Naive thymus-derived CD4-positive, alpha-beta T cell (primary cell): ENCODE measurements at regions of chr14 and their contacts with region 1.

Region 1: DNA sequence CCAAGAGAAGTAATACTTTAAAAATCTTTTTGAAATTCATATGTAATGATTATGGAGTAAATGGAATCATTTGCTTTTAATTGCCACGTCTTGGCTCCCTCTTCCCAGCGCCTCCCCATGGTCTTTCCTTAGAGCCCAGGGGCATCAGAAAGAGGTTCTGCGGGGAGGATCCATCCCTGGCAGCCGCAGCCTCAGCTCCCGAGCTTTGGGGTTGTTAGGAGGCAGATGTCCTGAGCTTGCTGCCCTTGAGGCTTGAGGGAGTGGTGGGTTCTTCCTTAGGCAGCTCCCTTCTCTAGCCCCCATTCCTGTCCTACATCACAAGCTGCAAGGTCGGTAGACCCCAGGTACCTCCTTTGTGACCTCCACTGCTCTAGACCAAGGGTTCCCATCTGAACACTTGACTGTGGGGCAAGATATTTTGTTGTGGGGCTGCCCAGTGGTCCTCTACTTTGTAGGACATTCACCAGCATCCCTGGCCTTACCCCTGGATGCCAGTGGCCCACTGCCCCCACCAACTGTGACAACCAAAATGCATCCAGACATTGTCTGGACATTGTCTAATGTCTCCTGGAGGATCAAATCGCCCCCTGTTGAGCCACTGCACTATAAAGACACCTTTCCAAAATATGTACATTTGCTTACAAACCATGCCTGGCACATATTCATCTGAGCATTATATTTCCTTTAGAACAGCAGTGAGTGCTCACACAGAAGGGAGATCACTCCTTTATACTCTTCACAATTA is 6.3 kb downstream of the PPP2R5C start:
- DNase-seq: no peak
- ATAC-seq: no peak
- H3K4me3 ChIP-seq: no peak overlapping the region
- H3K4me3 Mint-ChIP-seq: no peak overlapping the region
- H3K27ac ChIP-seq: no peak overlapping the region
- H3K27ac Mint-ChIP-seq: peak overlapping the region in 3 of 9 donors; percentile 2 to 43 (median 6)
- H3K4me1 ChIP-seq: peaks cover 9 to 11% of the 10 kb centered on the region in 2 donors
- H3K4me1 Mint-ChIP-seq: peaks cover 28 to 52% (median 38%) of the 10 kb centered on the region in 7 donors
- H3K27me3 ChIP-seq: no peaks in the 10 kb centered on the region
- H3K27me3 Mint-ChIP-seq: no peaks in the 10 kb centered on the region

Region 2: DNA sequence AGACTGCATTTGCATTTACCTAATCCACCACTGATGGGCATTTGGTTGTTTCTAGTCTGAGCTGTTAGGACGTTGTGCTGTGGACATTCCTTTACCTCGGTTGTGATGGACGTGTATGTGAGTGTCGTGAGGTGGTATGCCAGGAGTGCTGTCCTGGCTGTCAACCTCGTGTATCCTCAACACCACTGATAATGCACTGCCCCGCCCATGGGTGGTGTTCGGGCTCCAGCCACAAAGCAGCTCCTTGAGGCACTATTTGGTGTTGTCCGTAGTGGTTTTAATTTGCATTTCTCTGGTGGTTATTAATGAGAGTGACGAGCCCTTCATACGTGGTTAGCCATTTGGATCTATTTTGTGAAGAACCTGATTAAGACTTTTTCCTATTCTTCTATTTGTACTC is 81.3 kb after region 1 on chr14:
- CTCF ChIA-PET with region 1: interaction called, 42 read pairs
- POLR2A ChIA-PET with region 1: interaction called, 5 read pairs
- intact Hi-C with region 1: no loop called
- DNase-seq: no peak
- ATAC-seq: no peak
- H3K4me3 ChIP-seq: no peak overlapping the region
- H3K4me3 Mint-ChIP-seq: peak overlapping the region in 7 of 10 donors; percentile 7 to 85 (median 63)
- H3K27ac ChIP-seq: peak overlapping the region; percentile 1
- H3K27ac Mint-ChIP-seq: peak overlapping the region in 8 of 9 donors; percentile 4 to 95 (median 57)
- H3K4me1 ChIP-seq: peaks cover 50 to 71% of the 10 kb centered on the region in 2 donors
- H3K4me1 Mint-ChIP-seq: peaks cover 73 to 99% (median 94%) of the 10 kb centered on the region in 7 donors
- H3K27me3 ChIP-seq: no peaks in the 10 kb centered on the region
- H3K27me3 Mint-ChIP-seq: no peaks in the 10 kb centered on the region